CD8-positive, alpha-beta T cell (primary cell): ENCODE measurements at regions of chr13 and their contacts with region 1.

Region 1: DNA sequence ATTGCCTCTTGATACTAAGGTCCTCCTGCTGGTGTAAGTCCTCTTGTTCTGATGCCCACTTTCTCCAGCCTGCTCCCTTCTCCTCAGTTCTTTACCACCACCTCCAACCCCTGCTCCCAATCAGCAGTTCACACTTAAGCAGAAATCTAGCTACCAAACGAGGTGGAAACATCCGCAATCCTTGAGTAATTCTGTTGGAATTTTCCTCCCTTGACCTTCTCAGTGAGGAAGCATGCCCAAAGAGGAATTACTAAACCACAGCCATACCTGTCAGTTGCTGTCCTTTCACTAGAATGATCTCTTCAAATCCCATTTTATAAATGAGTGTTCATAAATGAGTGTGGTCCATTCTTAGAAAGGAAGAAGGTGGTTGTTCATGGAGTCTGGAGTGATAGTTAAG is 289.9 kb downstream of the DACH1 start:
- DNase-seq: no peak
- ATAC-seq: no peak
- H3K4me3 ChIP-seq: no peak overlapping the region
- H3K4me3 Mint-ChIP-seq: no peak overlapping the region
- H3K27ac ChIP-seq: no peak overlapping the region
- H3K27ac Mint-ChIP-seq: no peak overlapping the region
- H3K4me1 ChIP-seq: no peaks in the 10 kb centered on the region
- H3K4me1 Mint-ChIP-seq: no peaks in the 10 kb centered on the region
- H3K27me3 ChIP-seq: no peaks in the 10 kb centered on the region
- H3K27me3 Mint-ChIP-seq: no peaks in the 10 kb centered on the region
- CTCF ChIP-seq: no peak

Region 2: GRCh38 chr13:71517004-71517403 is 60.1 kb before region 1 on chr13:
- CTCF ChIA-PET with region 1: no interaction called
- POLR2A ChIA-PET with region 1: no interaction called
- intact Hi-C with region 1: loop called in 1 of 2 experiments (anchors 1 kb)
- DNase-seq: no peak
- ATAC-seq: no peak
- H3K4me3 ChIP-seq: no peak overlapping the region
- H3K4me3 Mint-ChIP-seq: no peak overlapping the region
- H3K27ac ChIP-seq: no peak overlapping the region
- H3K27ac Mint-ChIP-seq: no peak overlapping the region
- H3K4me1 ChIP-seq: no peaks in the 10 kb centered on the region
- H3K4me1 Mint-ChIP-seq: no peaks in the 10 kb centered on the region
- H3K27me3 ChIP-seq: no peaks in the 10 kb centered on the region
- H3K27me3 Mint-ChIP-seq: no peaks in the 10 kb centered on the region
- CTCF ChIP-seq: no peak

Region 3: DNA sequence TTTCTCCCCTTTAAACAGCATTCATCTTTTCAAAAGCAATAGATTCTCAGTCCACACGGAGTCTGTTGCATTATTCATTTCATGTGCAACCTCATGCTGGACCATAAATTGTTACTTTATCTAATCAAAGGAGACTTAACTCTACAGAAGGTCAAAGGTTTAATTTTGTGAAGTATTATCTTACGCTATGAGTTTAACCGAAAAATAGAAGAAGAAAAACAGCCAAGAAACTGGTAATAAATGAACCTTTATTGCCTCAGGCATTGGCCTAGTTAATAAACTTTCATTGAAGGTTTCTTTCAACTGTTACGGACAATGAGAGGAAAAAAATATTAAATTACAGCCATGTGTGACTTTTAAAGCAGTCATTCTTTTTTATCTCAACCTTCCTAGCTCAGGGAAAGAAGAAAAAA is 66.3 kb after region 1 on chr13:
- CTCF ChIA-PET with region 1: no interaction called
- POLR2A ChIA-PET with region 1: no interaction called
- intact Hi-C with region 1: no loop called
- DNase-seq: no peak
- ATAC-seq: no peak
- H3K4me3 ChIP-seq: no peak overlapping the region
- H3K4me3 Mint-ChIP-seq: no peak overlapping the region
- H3K27ac ChIP-seq: no peak overlapping the region
- H3K27ac Mint-ChIP-seq: no peak overlapping the region
- H3K4me1 ChIP-seq: no peaks in the 10 kb centered on the region
- H3K4me1 Mint-ChIP-seq: no peaks in the 10 kb centered on the region
- H3K27me3 ChIP-seq: no peaks in the 10 kb centered on the region
- H3K27me3 Mint-ChIP-seq: no peaks in the 10 kb centered on the region
- CTCF ChIP-seq: no peak

Region 4: DNA sequence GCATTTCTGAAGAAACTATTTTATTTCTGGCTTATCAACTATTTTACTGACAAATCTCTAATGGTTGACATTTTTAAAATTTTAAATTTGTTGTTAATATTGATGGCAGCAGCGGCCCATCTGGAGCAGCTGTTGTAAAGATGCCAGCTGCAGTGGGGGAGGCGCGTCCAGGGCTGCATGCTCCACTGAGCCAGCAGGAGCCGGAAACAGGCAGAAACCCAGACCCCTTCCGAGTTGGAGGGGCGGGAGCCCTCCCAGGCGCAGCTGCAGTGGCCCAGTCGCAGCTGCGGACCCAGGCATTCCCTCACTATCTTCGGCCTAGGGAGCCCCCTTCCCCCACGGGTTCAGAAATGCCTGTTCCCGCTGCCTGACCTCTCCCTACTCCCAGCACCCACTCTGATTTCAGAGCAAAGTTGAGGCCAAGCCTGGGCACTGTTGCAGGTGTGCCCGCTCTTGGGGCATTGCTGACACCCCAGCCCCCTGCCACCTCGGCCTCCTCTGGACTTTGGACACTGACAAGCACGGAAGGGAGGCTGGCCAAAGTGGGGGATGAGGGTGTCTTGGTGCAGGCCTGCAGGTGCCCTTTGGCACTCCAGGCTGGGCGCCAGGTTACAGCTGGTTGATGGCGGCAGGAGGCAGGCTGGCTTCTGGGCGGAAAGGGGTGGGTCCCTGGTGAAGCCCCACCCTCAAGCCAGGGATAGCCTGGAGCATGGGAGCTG is 1274.0 kb after region 1 on chr13:
- CTCF ChIA-PET with region 1: no interaction called
- POLR2A ChIA-PET with region 1: no interaction called
- intact Hi-C with region 1: loop called in 1 of 2 experiments (anchors 10 kb)
- DNase-seq: peak in 1 of 9 experiments; percentile 2
- ATAC-seq: no peak
- H3K4me3 ChIP-seq: no peak overlapping the region
- H3K4me3 Mint-ChIP-seq: no peak overlapping the region
- H3K27ac ChIP-seq: no peak overlapping the region
- H3K27ac Mint-ChIP-seq: no peak overlapping the region
- H3K4me1 ChIP-seq: no peaks in the 10 kb centered on the region
- H3K4me1 Mint-ChIP-seq: no peaks in the 10 kb centered on the region
- H3K27me3 ChIP-seq: no peaks in the 10 kb centered on the region
- H3K27me3 Mint-ChIP-seq: no peaks in the 10 kb centered on the region
- CTCF ChIP-seq: no peak